Activated CD4-positive, alpha-beta T cell treated with anti-CD3 and anti-CD28 coated beads for 36 hours (primary cell): ENCODE measurements at regions of chr1 and their contacts with region 1.

Region 1: DNA sequence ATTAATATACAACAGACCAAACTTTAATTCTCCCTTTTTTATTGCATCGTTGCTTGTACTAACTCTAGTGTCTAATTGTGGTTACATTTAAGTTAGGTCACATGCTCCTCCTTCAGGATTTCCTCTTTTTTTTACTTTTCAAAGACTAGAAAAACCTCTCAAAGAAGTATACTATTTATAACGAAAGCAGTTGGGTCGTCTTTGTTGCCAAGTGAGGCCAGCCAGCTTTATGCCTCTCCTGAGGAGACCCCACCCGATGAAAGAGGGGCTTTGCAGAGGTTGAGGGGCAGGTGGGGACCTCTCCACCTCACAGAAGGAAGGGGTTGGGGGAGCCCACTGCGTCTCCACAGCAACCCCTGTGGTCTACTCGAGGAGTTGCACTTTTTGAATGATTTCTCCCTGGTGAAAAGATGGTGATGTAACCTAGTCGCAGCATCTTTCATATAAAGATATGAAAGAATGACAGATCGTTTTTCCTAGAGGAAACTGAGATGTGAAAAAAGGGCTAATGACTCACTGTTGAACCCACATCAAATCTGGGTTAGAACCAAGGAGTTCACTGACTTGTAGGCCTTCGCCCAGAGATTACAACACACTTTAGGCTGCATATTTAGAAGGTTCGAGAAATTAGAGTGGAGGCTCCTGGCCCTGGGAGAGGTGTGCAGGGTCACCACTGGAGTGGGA is 6.4 kb downstream of the TGFB2 start:
- DNase-seq: peak; percentile 51
- ATAC-seq: peak; percentile 92
- H3K4me3 Mint-ChIP-seq: peak overlapping the region; percentile 43
- H3K27ac Mint-ChIP-seq: no peak overlapping the region
- H3K4me1 Mint-ChIP-seq: peaks cover 27% of the 10 kb centered on the region
- H3K27me3 Mint-ChIP-seq: peaks cover 53% of the 10 kb centered on the region

Region 2: GRCh38 chr1:218377143-218377660 is 25.7 kb after region 1 on chr1:
- CTCF ChIA-PET with region 1: interaction called, 3 read pairs
- POLR2A ChIA-PET with region 1: no interaction called
- intact Hi-C with region 1: loop called (anchors 1 kb)
- DNase-seq: peak; percentile 77
- ATAC-seq: peak; percentile 94
- H3K4me3 Mint-ChIP-seq: no peak overlapping the region
- H3K27ac Mint-ChIP-seq: peak overlapping the region; percentile 31
- H3K4me1 Mint-ChIP-seq: peaks cover 8% of the 10 kb centered on the region
- H3K27me3 Mint-ChIP-seq: peaks cover 54% of the 10 kb centered on the region

Region 3: GRCh38 chr1:219066631-219067349 is 715.3 kb after region 1 on chr1:
- CTCF ChIA-PET with region 1: no interaction called
- POLR2A ChIA-PET with region 1: no interaction called
- intact Hi-C with region 1: loop called in 1 of 2 experiments (anchors 10 kb)
- DNase-seq: no peak
- ATAC-seq: peak; percentile 49
- H3K4me3 Mint-ChIP-seq: no peak overlapping the region
- H3K27ac Mint-ChIP-seq: no peak overlapping the region
- H3K4me1 Mint-ChIP-seq: peaks cover 3% of the 10 kb centered on the region
- H3K27me3 Mint-ChIP-seq: peaks cover 2% of the 10 kb centered on the region

Region 4: GRCh38 chr1:219189021-219189824 is 837.7 kb after region 1 on chr1:
- CTCF ChIA-PET with region 1: no interaction called
- POLR2A ChIA-PET with region 1: no interaction called
- intact Hi-C with region 1: loop called in 1 of 2 experiments (anchors 1 kb)
- DNase-seq: no peak
- ATAC-seq: peak; percentile 92
- H3K4me3 Mint-ChIP-seq: no peak overlapping the region
- H3K27ac Mint-ChIP-seq: no peak overlapping the region
- H3K4me1 Mint-ChIP-seq: peaks cover 34% of the 10 kb centered on the region
- H3K27me3 Mint-ChIP-seq: no peaks in the 10 kb centered on the region